Activated T-helper 1 cell treated with anti-CD3 and anti-CD28 coated beads, Interleukin-12 subunit alpha, Interleukin-12 subunit beta, Interleukin-2, Interleukin-4 antibody, amounts not matched to agents 30 ng/mL and 10 ng/mL and 1 ng/mL, durations not matched to agents 14 hours and 24 hours and 36 hours (primary cell): ENCODE measurements at regions of chr4 and their contacts with region 1.

Region 1: GRCh38 chr4:47914220-47914925 is at the start of gene NFXL1:
- DNase-seq: peak; percentile 94
- H3K4me3 Mint-ChIP-seq: peak within 1 kb of the TSS; percentile 90
- H3K27ac Mint-ChIP-seq: peak within 1 kb of the TSS; percentile 95
- H3K4me1 Mint-ChIP-seq: peaks cover 31% of the 10 kb centered on the region
- H3K27me3 Mint-ChIP-seq: no peaks in the 10 kb centered on the region
- total RNA-seq, gene NFXL1: 13.1 and 16.5 TPM in 2 replicates

Region 2: DNA sequence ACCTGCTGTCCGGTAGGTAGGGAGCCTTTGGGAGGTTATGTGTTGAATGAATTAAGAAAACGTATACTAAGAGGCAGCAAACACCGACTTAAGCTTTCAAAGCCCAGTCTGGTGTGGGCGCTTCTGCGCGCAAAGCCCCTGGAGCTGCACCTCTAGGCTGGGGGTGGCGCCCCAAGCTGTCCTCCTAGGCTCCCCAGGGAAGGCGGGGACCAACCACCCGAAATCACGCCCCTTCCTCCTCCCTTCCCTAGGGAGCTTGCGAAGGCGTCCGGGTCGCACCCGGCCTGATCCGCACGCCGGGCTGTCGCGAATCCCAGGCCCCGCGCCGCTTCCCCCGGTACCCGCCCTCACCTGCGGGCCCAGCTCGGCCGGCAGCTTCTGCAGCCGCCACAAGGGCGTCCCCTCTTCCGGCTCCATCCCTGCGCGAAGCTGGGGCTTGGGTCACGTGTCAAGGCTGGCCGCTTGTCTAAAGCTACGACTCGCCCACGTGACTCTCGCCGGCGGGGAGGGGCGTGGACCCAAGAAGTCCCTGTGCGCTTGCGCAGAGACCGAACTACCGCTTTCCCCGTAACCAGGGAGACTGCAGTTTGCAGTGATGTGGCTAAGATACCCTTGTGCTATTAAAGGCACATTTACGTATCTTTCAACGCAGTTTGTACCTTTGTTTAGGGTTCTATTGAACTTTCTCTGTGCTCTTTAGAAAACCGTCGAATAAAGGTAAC is 451.0 kb before region 1 on chr4 and contains the start of gene COMMD8:
- intact Hi-C with region 1: loop called (anchors 1 kb)
- DNase-seq: peak; percentile 96
- H3K4me3 Mint-ChIP-seq: peak within 1 kb of the TSS; percentile 86
- H3K27ac Mint-ChIP-seq: peak within 1 kb of the TSS; percentile 53
- H3K4me1 Mint-ChIP-seq: peaks cover 32% of the 10 kb centered on the region
- H3K27me3 Mint-ChIP-seq: no peaks in the 10 kb centered on the region
- total RNA-seq, gene COMMD8: 15.8 and 15.9 TPM in 2 replicates

Region 3: DNA sequence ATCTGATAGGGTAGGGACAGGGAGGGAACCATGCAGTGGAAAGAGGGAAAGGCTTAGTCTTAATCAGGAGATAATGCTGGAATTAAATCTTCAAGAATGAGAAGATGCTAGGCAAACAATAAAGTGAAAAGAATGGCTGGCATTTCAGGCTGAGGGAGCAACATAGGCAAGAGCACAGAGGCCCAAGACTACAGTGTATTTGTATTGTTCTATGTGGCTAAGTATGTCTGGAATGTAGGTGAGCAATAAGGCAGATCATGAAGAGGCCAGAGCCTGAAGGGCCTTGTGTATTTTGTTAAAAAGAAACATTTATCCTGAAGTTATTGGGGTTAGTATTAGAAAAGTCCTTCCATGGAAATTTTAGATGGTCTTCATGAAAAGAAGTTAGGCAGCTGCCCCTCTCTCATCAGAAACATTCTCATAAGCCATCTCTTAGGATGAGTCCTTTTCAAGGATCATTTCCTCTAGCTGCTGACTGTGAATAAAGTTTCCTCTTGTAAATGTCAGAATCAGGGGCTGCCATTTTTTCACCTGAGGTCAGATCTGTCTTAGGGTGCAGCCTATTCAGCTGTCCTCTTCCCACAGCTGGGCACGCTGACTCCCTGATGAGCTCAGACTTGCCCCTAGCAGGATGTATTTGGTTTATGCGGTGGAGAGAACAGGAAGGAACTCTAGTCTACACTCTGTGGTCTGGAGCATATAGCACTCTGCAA is 383.0 kb before region 1 on chr4:
- intact Hi-C with region 1: loop called (anchors 5 kb)
- DNase-seq: peak; percentile 70
- H3K4me3 Mint-ChIP-seq: peak overlapping the region; percentile 0
- H3K27ac Mint-ChIP-seq: peak overlapping the region; percentile 21
- H3K4me1 Mint-ChIP-seq: peaks cover 48% of the 10 kb centered on the region
- H3K27me3 Mint-ChIP-seq: no peaks in the 10 kb centered on the region

Region 4: GRCh38 chr4:47873877-47874541 is 40.4 kb before region 1 on chr4:
- intact Hi-C with region 1: loop called (anchors 1 kb)
- DNase-seq: no peak
- H3K4me3 Mint-ChIP-seq: no peak overlapping the region
- H3K27ac Mint-ChIP-seq: no peak overlapping the region
- H3K4me1 Mint-ChIP-seq: peaks cover 8% of the 10 kb centered on the region
- H3K27me3 Mint-ChIP-seq: no peaks in the 10 kb centered on the region

Region 5: GRCh38 chr4:48047421-48047844 is 133.1 kb after region 1 on chr4:
- intact Hi-C with region 1: loop called (anchors 5 kb)
- DNase-seq: peak; percentile 55
- H3K4me3 Mint-ChIP-seq: peak overlapping the region; percentile 44
- H3K27ac Mint-ChIP-seq: peak overlapping the region; percentile 10
- H3K4me1 Mint-ChIP-seq: peaks cover 35% of the 10 kb centered on the region
- H3K27me3 Mint-ChIP-seq: peaks cover 63% of the 10 kb centered on the region

Region 6: GRCh38 chr4:48141048-48141447 is 226.7 kb after region 1 on chr4:
- intact Hi-C with region 1: loop called (anchors 2 kb)
- DNase-seq: no peak
- H3K4me3 Mint-ChIP-seq: no peak overlapping the region
- H3K27ac Mint-ChIP-seq: peak overlapping the region; percentile 1
- H3K4me1 Mint-ChIP-seq: peaks cover 52% of the 10 kb centered on the region
- H3K27me3 Mint-ChIP-seq: no peaks in the 10 kb centered on the region

Region 7: GRCh38 chr4:48340965-48341775 is 426.8 kb after region 1 on chr4 and contains the start of gene SLAIN2:
- intact Hi-C with region 1: loop called (anchors 1 kb)
- DNase-seq: peak; percentile 98
- H3K4me3 Mint-ChIP-seq: peak within 1 kb of the TSS; percentile 98
- H3K27ac Mint-ChIP-seq: peak within 1 kb of the TSS; percentile 98
- H3K4me1 Mint-ChIP-seq: peaks cover 74% of the 10 kb centered on the region
- H3K27me3 Mint-ChIP-seq: no peaks in the 10 kb centered on the region
- total RNA-seq, gene SLAIN2: 71.4 and 79.4 TPM in 2 replicates